WTC11 (cell line): ENCODE measurements at regions of chr1 and their contacts with region 1.

Region 1: DNA sequence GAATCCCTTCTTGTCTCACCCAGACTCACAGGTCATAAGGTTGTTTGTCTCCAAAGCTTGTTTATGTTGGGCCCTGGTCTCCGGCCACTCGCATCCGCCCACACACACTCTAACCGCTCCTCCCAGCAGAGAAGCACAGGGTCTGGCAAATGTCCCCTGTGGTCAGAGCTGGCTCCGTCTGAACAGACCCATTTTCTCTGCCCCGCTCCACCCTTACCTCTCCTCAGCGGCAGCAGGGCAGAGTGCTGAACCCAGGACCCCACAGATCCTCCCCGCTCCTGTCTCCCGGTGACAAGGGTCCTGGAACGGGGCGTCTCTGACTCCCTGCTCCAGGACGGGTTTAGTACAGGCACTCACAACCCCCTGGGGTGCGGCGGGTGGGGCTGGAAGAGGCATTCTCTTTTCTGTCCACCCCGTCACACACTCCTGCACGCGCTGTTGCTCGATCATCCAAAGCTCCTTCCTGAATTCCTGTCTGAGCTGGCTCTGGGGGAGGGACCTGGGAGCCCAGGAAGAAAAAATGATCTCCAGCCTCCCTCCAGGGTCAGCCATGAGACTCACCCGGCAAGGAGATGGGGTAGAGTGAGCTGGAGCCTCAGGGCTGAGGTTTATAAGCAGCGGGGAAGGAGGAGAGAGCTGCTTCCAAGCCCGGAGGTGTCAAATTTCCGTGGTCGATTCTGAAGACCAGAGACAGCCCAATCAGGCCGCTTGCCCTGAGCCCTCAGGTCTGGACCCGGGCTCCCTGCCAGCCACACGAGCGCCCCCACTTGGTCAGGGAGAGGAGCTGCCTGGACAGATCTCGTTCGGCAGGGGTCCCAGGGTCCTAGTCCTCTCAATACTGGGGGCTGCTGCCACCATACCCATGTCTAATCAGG is at the start of gene S100A13:
- DNase-seq: peak; percentile 95
- ATAC-seq: peak; percentile 93
- H3K4me3 Mint-ChIP-seq: peak within 1 kb of the TSS; percentile 81
- H3K27ac Mint-ChIP-seq: peak within 1 kb of the TSS; percentile 93
- H3K4me1 Mint-ChIP-seq: peaks cover 56% of the 10 kb centered on the region
- H3K27me3 Mint-ChIP-seq: no peaks in the 10 kb centered on the region
- CTCF ChIP-seq: peak; percentile 72; the same call in 1 of the 2 replicates
- total RNA-seq, gene S100A13: 68.4 to 84.2 TPM (median 73.9 TPM) in 3 replicates

Region 2: GRCh38 chr1:153352523-153352922 is 274.6 kb before region 1 on chr1:
- CTCF ChIA-PET with region 1: interaction called, 13 read pairs
- POLR2A ChIA-PET with region 1: no interaction called
- DNase-seq: peak; percentile 68
- ATAC-seq: peak; percentile 29
- H3K4me3 Mint-ChIP-seq: no peak overlapping the region
- H3K27ac Mint-ChIP-seq: no peak overlapping the region
- H3K4me1 Mint-ChIP-seq: peaks cover 6% of the 10 kb centered on the region; the same call in 1 of the 2 replicates
- H3K27me3 Mint-ChIP-seq: peaks cover 18% of the 10 kb centered on the region; the same call in 1 of the 2 replicates
- CTCF ChIP-seq: peak; percentile 76

Region 3: GRCh38 chr1:153478047-153478691 is 149.0 kb before region 1 on chr1:
- CTCF ChIA-PET with region 1: no interaction called
- POLR2A ChIA-PET with region 1: no interaction called
- DNase-seq: no peak
- ATAC-seq: no peak
- H3K4me3 Mint-ChIP-seq: no peak overlapping the region
- H3K27ac Mint-ChIP-seq: no peak overlapping the region
- H3K4me1 Mint-ChIP-seq: no peaks in the 10 kb centered on the region
- H3K27me3 Mint-ChIP-seq: peaks cover under 1% of the 10 kb centered on the region; the same call in 1 of the 2 replicates
- CTCF ChIP-seq: no peak

Region 4: GRCh38 chr1:153510984-153511410 is 116.2 kb before region 1 on chr1:
- CTCF ChIA-PET with region 1: interaction called, 36 read pairs
- POLR2A ChIA-PET with region 1: no interaction called
- DNase-seq: peak; percentile 93
- ATAC-seq: peak; percentile 96
- H3K4me3 Mint-ChIP-seq: no peak overlapping the region
- H3K27ac Mint-ChIP-seq: no peak overlapping the region
- H3K4me1 Mint-ChIP-seq: peaks cover 5% of the 10 kb centered on the region; the same call in 1 of the 2 replicates
- H3K27me3 Mint-ChIP-seq: peaks cover 38% of the 10 kb centered on the region
- CTCF ChIP-seq: peak; percentile 81

Region 5: DNA sequence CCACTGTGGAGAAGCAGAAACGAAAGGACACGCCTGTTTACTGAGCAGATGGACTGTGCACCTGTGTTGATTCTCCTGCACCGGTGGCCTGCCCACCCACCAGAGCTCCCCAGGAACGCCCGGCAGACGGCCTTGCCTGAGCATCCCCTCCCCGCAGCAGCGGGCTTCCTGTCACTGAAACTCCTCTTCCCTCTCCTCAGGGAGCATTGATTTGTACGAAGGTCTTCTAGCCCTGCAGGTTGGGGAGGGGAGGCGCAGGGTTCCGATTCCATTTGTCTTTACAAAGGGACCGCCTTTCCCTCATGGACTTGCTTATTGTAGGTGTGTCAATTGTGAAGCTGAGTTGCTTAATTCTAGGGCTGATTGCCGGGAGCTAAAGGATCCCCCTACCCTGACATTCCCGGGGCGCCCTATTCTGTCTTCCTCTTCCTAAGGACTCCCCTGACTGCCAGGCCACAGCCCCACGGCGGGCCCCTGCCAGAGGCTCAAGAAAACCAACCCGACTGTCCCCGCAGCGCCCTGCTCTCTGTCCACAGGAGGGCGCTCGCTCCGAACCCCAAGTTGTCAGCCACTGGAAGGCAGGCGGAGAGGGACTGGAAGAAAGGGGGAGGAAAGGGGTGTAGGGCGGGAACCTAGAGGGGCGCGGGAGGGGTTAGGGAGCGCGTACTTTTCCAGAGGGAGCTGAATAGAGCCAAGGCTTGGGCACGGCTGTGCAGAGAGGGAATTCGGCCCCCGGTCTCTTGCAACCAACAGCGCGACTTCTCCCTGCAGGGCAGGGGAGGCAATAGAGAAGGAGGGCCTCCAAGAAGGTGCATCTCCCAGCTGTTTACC is 94.2 kb before region 1 on chr1:
- CTCF ChIA-PET with region 1: interaction called, 131 read pairs
- POLR2A ChIA-PET with region 1: interaction called, 13 read pairs
- DNase-seq: peak; percentile 94
- ATAC-seq: peak; percentile 85
- H3K4me3 Mint-ChIP-seq: peak overlapping the region; percentile 63
- H3K27ac Mint-ChIP-seq: peak overlapping the region; percentile 85
- H3K4me1 Mint-ChIP-seq: peaks cover 44% of the 10 kb centered on the region
- H3K27me3 Mint-ChIP-seq: peaks cover 37% of the 10 kb centered on the region
- CTCF ChIP-seq: peak; percentile 72

Region 6: GRCh38 chr1:153572569-153573015 is 54.6 kb before region 1 on chr1:
- CTCF ChIA-PET with region 1: interaction called, 98 read pairs
- POLR2A ChIA-PET with region 1: interaction called, 5 read pairs
- DNase-seq: peak; percentile 73
- ATAC-seq: peak; percentile 77
- H3K4me3 Mint-ChIP-seq: no peak overlapping the region
- H3K27ac Mint-ChIP-seq: no peak overlapping the region
- H3K4me1 Mint-ChIP-seq: peaks cover 17% of the 10 kb centered on the region
- H3K27me3 Mint-ChIP-seq: peaks cover 2% of the 10 kb centered on the region; the same call in 1 of the 2 replicates
- CTCF ChIP-seq: peak; percentile 30

Region 7: DNA sequence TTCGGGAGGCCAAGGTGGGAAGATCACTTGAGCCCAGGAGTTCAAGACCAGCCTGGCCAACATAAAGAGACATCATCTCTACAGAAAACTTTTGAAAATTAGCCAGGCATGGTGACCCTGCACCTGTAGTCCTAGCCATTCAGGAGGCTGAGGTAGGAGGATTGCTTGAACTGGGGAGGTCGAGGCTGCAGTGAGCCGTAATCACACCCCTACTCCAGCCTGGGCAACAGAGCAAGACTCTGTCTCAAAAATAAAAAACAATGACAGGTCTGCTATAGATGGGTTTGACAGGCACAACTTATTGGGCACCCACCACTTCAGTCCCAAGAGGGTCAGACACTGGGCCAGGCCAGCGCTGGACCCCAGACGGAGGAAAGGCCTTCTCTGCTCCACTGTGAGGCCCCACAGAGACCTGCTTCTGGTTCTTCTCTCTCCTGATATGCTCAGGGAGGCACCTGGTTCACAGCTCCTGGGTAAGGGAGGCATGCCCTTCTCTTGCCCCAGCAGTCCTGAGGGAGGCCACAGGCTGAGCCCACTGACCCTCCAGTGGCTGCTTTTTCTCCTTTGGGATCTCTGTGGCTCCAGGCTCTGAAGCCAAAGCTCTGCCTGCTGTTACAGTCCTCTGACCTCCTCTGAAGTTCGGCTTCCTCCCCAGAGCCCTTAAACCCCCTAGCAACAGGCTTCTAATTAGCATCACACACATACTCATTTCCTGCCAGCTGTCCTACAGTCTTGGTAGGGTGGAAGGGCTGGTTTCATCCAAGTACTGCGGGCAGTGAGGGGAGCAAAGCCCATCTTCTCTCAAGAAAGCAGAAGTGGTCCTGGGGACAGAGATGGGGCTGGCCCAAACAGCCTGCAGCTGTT is 28.6 kb before region 1 on chr1:
- CTCF ChIA-PET with region 1: interaction called, 39 read pairs
- POLR2A ChIA-PET with region 1: interaction called, 6 read pairs
- DNase-seq: peak; percentile 50
- ATAC-seq: peak; percentile 99
- H3K4me3 Mint-ChIP-seq: 0 out of 2 replicates have a peak overlapping the region, but pooled peaks have one; percentile 2
- H3K27ac Mint-ChIP-seq: peak overlapping the region; percentile 93
- H3K4me1 Mint-ChIP-seq: peaks cover 28% of the 10 kb centered on the region
- H3K27me3 Mint-ChIP-seq: no peaks in the 10 kb centered on the region
- CTCF ChIP-seq: no peak

Region 8: DNA sequence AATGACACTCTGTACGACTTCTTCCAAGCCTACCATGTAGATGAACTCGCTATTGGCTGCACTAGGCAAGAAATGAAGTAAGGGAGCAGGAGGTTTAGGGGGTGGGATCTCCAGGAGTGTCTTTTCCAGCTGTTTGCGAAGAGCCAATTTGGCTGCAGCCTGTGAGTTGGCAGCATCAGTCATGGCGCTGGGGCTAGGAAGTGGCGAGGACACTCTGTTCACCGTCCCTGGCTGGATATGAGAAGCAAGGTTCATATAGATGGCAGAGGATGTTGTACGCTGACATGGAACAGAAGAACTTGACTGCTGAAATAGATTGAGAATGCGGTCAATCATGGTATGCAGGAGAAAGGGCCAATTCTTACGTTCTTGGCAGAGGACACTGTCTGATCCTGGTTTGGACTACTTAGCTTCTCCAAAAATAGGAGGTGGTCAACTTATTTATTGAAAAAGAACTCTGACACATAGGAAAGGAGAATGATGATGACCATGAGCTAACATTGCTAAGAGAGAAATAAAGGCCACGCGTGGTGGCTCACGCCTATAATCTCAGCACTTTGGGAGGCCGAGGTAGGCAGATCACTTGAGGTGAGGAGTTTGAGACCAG is 189.2 kb after region 1 on chr1:
- CTCF ChIA-PET with region 1: no interaction called
- POLR2A ChIA-PET with region 1: no interaction called
- DNase-seq: no peak
- ATAC-seq: no peak
- H3K4me3 Mint-ChIP-seq: no peak overlapping the region
- H3K27ac Mint-ChIP-seq: no peak overlapping the region
- H3K4me1 Mint-ChIP-seq: no peaks in the 10 kb centered on the region
- H3K27me3 Mint-ChIP-seq: no peaks in the 10 kb centered on the region
- CTCF ChIP-seq: no peak